ENCODE measurements at regions of chr11 and their contacts with region 1.

Region 1: DNA sequence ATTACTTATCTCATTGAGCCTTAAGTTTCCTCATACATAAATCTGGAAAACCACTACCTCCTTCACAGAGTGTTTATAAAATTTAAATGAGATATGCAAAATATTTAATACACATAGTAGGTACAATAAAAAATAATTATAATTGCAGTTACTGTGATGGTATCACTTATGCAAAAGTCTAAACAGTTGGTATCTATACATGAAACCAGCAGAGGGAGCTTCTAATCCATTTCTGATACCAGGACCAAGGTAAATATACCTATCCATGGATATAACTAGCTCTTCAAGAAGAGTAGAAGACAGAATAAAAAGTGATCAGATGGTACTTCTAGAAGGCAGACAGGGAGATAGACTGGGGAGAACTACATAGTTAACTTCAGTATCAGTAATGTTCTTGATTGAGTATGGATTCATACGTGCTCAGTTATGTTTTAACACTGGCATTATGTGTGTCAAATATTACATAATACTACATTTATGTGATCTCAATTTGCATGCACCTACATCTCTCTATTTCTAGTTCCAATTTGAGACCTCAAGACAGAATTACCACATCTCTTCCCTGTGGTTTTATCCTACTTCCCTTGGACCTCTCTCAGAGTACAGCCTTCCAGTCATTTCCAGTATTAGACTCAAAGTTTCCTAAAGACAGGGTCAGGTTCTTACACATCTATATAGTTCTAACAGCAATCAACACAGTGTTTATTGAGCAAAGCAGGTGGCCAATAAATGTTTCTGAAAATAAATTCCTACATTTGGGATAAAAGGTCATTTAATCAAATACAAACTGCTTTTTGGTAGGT is 13.7 kb upstream of the TSG101 start:
- DNase-seq: peak in 1 of 2 experiments; percentile 37
- H3K4me3 ChIP-seq: no peak overlapping the region
- H3K4me3 Mint-ChIP-seq: no peak overlapping the region
- H3K27ac Mint-ChIP-seq: no peak overlapping the region
- H3K4me1 ChIP-seq: 0 out of 2 replicates have a peak, but pooled peaks cover 6% of the 10 kb centered on the region
- H3K4me1 Mint-ChIP-seq: no peaks in the 10 kb centered on the region
- H3K27me3 ChIP-seq: no peaks in the 10 kb centered on the region
- H3K27me3 Mint-ChIP-seq: no peaks in the 10 kb centered on the region
- CTCF ChIP-seq: peak; percentile 58 to 65

Region 2: GRCh38 chr11:18492888-18493287 is 47.5 kb before region 1 on chr11:
- CTCF ChIA-PET with region 1: no interaction called
- POLR2A ChIA-PET with region 1: no interaction called
- intact Hi-C with region 1: no loop called
- DNase-seq: no peak
- H3K4me3 ChIP-seq: no peak overlapping the region
- H3K4me3 Mint-ChIP-seq: no peak overlapping the region
- H3K27ac Mint-ChIP-seq: no peak overlapping the region
- H3K4me1 ChIP-seq: peaks cover 16% of the 10 kb centered on the region; the same call in 1 of the 2 replicates
- H3K4me1 Mint-ChIP-seq: no peaks in the 10 kb centered on the region
- H3K27me3 ChIP-seq: no peaks in the 10 kb centered on the region
- H3K27me3 Mint-ChIP-seq: no peaks in the 10 kb centered on the region
- CTCF ChIP-seq: no peak

Region 3: GRCh38 chr11:18650859-18651557 is 110.6 kb after region 1 on chr11:
- CTCF ChIA-PET with region 1: interaction called, 5 read pairs
- POLR2A ChIA-PET with region 1: no interaction called
- intact Hi-C with region 1: loop called (anchors 1 kb)
- DNase-seq: peak; percentile 65 to 66
- H3K4me3 ChIP-seq: no peak overlapping the region
- H3K4me3 Mint-ChIP-seq: no peak overlapping the region
- H3K27ac Mint-ChIP-seq: no peak overlapping the region
- H3K4me1 ChIP-seq: no peaks in the 10 kb centered on the region
- H3K4me1 Mint-ChIP-seq: no peaks in the 10 kb centered on the region
- H3K27me3 ChIP-seq: no peaks in the 10 kb centered on the region
- H3K27me3 Mint-ChIP-seq: no peaks in the 10 kb centered on the region
- CTCF ChIP-seq: peak; percentile 47 to 70

Region 4: DNA sequence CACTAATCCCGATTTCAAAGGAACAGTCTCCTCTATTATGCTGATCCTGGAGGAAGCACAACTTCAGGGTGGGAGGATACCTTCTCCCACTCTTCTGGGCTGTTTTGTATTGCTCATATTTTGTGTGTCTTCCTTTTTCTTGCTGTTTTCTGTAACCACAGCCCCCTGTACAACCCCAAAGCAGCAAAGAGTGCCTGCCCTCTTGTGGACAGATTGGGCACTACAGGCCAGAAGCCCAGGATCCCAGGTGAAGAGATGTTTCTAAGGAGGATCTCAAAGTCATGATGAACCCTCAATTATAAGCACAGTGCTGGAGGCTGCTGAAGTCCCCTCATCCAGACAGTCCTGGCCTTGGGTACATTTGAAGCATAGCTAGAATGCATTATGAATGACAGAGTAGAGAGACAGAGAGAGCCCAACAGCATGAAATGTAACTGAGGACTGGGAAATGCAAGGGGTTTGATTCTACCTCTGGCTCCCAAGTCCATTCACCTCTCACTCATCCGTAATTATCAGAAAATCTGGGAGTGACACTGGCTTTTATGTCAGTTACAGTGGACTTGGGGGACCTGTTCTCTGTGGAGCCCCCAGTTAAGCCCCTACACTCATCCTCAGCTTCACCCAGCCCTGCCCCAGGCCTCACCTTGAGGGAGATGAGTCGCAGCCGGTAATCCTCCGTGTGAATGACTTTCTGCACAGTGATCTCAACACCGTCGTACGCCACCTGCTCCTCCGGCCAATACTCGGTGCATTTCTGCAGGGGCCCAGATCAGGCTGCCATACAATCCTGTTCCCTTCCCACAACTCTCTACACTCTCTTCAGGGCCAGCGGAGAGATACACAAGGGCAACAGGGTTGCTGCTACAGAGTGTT is 191.8 kb after region 1 on chr11:
- CTCF ChIA-PET with region 1: interaction called, 8 read pairs
- POLR2A ChIA-PET with region 1: no interaction called
- intact Hi-C with region 1: loop called (anchors 1 kb)
- DNase-seq: peak; percentile 60 to 74
- H3K4me3 ChIP-seq: no peak overlapping the region
- H3K4me3 Mint-ChIP-seq: no peak overlapping the region
- H3K27ac Mint-ChIP-seq: no peak overlapping the region
- H3K4me1 ChIP-seq: 0 out of 2 replicates have a peak, but pooled peaks cover 17% of the 10 kb centered on the region
- H3K4me1 Mint-ChIP-seq: peaks cover 23% of the 10 kb centered on the region
- H3K27me3 ChIP-seq: no peaks in the 10 kb centered on the region
- H3K27me3 Mint-ChIP-seq: peaks cover 10% of the 10 kb centered on the region
- CTCF ChIP-seq: peak; percentile 91 to 98